PC-9 (cell line): ENCODE measurements at regions of chr6 and their contacts with region 1.

Region 1: GRCh38 chr6:134822920-134823709 is 126.8 kb downstream of the ALDH8A1 start:
- DNase-seq: peak; percentile 41 to 77
- H3K4me3 ChIP-seq: no peak overlapping the region
- H3K27ac ChIP-seq: no peak overlapping the region
- H3K4me1 ChIP-seq: peaks cover 6% of the 10 kb centered on the region
- H3K27me3 ChIP-seq: no peaks in the 10 kb centered on the region
- CTCF ChIP-seq: peak; percentile 93

Region 2: DNA sequence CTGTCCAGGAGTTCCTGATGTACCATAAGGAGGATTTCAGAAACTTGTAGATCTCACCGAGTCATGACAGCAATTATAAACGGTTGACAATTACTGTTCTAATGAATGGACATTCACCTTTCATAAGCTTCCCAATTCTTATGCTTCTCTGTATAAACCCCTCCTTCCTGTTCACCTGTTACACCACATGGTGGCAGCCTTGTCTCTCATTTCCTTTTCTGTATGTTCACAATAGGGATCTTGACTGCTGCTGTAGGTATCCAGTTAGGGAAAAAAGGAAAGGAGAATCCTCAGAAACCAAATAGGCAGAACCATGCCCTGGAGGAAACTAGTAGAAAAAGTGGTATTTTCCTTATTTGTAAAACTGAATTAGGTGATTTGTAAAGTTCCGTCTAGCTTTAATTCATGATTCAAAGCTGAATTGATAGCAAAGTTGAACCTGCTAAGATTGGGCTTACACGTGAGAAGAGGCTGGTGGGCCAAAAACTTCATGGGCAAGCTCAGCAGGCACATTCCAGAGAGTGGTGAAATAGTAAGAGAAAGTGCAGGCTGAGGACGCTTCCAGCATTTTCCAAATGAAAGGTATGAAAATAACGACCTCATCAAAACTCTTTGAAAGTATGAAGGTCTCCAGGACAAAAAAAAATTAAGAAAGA is 899.0 kb before region 1 on chr6:
- CTCF ChIA-PET with region 1: no interaction called
- POLR2A ChIA-PET with region 1: no interaction called
- intact Hi-C with region 1: loop called (anchors 1 kb)
- DNase-seq: peak; percentile 58 to 66
- H3K4me3 ChIP-seq: no peak overlapping the region
- H3K27ac ChIP-seq: no peak overlapping the region
- H3K4me1 ChIP-seq: no peaks in the 10 kb centered on the region
- H3K27me3 ChIP-seq: no peaks in the 10 kb centered on the region
- CTCF ChIP-seq: peak; percentile 98

Region 3: DNA sequence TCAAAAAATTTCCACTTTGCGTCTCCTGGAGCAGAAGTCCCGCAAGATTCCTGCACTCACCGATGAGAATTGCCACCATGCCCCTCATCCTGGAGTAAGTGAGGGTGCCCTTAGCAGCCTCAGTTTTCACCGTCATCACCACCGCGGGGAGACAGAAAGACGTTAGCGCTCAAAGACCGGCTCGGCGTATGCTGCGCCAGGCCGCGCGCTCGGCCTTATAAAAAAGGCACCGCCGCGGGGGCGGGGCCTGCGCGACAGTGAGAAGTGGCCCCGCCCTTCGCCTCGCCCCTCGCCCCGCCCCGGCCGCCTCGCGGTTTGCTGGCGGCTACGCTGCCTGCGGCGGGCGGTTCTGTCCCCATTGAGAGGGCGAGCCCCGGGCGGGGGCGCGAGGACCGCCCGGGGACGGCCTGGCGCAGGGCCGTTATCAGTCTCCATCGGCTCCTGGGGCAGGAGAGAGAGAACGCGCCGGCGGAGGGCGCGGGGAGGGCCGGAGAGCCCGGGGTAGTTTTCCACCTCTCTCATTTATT is 648.4 kb before region 1 on chr6:
- CTCF ChIA-PET with region 1: interaction called, 3 read pairs
- POLR2A ChIA-PET with region 1: no interaction called
- intact Hi-C with region 1: loop called (anchors 1 kb)
- DNase-seq: peak; percentile 82 to 93
- H3K4me3 ChIP-seq: peak overlapping the region; percentile 73
- H3K27ac ChIP-seq: peak overlapping the region; percentile 84
- H3K4me1 ChIP-seq: peaks cover 21% of the 10 kb centered on the region
- H3K27me3 ChIP-seq: no peaks in the 10 kb centered on the region
- CTCF ChIP-seq: no peak

Region 4: GRCh38 chr6:134537146-134537555 is 286.0 kb before region 1 on chr6:
- CTCF ChIA-PET with region 1: interaction called, 3 read pairs
- POLR2A ChIA-PET with region 1: interaction called, 6 read pairs
- intact Hi-C with region 1: loop called (anchors 10 kb)
- DNase-seq: peak; percentile 66 to 96
- H3K4me3 ChIP-seq: no peak overlapping the region
- H3K27ac ChIP-seq: peak overlapping the region; percentile 72
- H3K4me1 ChIP-seq: peaks cover 23% of the 10 kb centered on the region
- H3K27me3 ChIP-seq: no peaks in the 10 kb centered on the region
- CTCF ChIP-seq: no peak

Region 5: DNA sequence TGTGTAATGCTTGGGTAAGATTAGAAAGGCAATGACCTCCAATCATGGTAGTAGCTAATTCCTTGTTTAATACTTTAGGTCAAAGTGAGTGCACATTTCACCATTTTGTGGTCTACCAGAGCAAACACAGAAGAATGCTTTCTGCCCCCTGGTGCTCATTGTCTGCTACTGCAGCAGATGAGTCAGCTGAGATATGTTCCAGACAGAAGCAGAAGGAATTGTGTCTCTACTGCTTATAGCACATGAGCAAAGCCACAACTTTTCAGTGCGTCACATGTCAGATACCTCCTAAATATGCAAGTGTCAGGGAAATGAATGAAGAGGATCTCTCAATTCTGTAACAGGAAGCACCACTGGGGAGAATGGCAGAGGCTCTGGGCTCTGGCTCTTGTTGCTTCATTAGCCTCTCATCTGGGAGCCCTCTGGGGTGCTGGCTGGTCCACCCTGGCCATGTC is 182.1 kb before region 1 on chr6:
- CTCF ChIA-PET with region 1: interaction called, 11 read pairs
- POLR2A ChIA-PET with region 1: no interaction called
- intact Hi-C with region 1: loop called (anchors 1 kb)
- DNase-seq: peak; percentile 65 to 82
- H3K4me3 ChIP-seq: no peak overlapping the region
- H3K27ac ChIP-seq: no peak overlapping the region
- H3K4me1 ChIP-seq: peaks cover 32% of the 10 kb centered on the region
- H3K27me3 ChIP-seq: no peaks in the 10 kb centered on the region
- CTCF ChIP-seq: peak; percentile 98

Region 6: DNA sequence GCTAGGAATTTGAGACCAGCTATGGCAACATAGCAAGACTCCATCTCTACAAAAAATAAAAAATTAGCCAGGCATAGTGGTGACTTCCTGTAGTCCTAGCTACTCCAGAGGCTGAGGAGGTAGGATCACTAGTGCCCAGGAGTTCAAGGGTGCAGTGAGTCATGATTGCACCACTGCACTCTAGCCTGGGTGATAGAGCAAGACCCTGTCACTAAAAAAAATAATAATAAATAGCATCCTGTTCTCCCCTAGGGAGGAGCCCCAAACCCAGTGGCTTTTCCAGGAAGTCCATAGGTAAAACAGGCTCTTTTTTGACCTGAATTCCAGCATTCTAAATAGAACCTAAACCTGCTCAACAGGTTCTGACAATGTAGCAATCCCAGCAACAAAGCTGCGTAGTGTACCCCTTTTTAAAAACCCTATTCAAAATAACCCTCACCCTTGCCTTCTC is 65.2 kb before region 1 on chr6:
- CTCF ChIA-PET with region 1: no interaction called
- POLR2A ChIA-PET with region 1: no interaction called
- intact Hi-C with region 1: loop called (anchors 5 kb)
- DNase-seq: peak; percentile 78 to 99
- H3K4me3 ChIP-seq: peak overlapping the region; percentile 15; the same call in 1 of the 2 replicates
- H3K27ac ChIP-seq: peak overlapping the region; percentile 77
- H3K4me1 ChIP-seq: peaks cover 37% of the 10 kb centered on the region
- H3K27me3 ChIP-seq: no peaks in the 10 kb centered on the region
- CTCF ChIP-seq: no peak

Region 7: DNA sequence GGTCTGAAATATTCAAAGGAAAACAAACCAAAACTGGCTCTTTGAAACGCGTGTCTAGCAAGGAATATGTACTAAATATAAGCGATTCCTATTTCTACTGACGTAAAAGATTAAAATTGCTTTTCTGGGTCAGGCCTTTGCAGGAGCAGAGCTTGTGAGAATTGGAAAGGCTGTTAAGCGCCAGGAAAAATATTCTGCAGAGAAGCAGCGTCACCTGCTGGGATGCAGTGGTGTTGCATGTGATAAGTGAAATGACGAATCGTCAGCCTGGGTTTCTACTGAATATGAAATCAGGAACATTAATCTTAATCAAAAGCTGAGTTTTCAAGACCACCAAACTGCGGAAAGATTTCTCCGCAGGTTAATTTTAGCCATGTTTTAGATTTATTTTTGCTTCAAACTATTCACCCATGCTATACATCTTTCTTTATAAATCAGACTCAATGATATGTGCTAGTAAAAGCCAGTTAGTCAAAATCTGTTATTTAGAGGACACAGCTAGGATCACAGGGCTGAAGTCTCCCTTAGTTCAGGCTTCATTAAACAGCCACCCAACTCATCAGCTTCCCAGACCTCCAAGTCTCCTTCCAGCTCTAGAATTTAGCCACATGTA is 59.4 kb after region 1 on chr6:
- CTCF ChIA-PET with region 1: interaction called, 8 read pairs
- POLR2A ChIA-PET with region 1: no interaction called
- intact Hi-C with region 1: loop called (anchors 2 kb)
- DNase-seq: peak in 1 of 2 experiments; percentile 59
- H3K4me3 ChIP-seq: no peak overlapping the region
- H3K27ac ChIP-seq: no peak overlapping the region
- H3K4me1 ChIP-seq: no peaks in the 10 kb centered on the region
- H3K27me3 ChIP-seq: no peaks in the 10 kb centered on the region
- CTCF ChIP-seq: peak; percentile 100